Gastrocnemius medialis (tissue), 4 donors: ENCODE measurements at regions of chr19 and their contacts with region 1.

Region 1: GRCh38 chr19:18521885-18522624 is at the start of gene ELL:
- DNase-seq: peak; percentile 100
- ATAC-seq: peak; percentile 73 to 74
- H3K4me3 ChIP-seq: peak within 1 kb of the TSS; percentile 85 to 99 (median 95)
- H3K27ac ChIP-seq: peak within 1 kb of the TSS; percentile 97 to 100 (median 98)
- H3K4me1 ChIP-seq: peaks cover 27 to 31% of the 10 kb centered on the region in 2 donors
- H3K27me3 ChIP-seq: no peaks in the 10 kb centered on the region
- CTCF ChIP-seq: peak in 1 of 5 experiments; percentile 40
- POLR2A ChIP-seq: peak; percentile 99
- total RNA-seq, gene ELL: 21.8 to 30.8 (median 27.3) TPM

Region 2: GRCh38 chr19:18450931-18451845 is 70.9 kb before region 1 on chr19:
- in situ Hi-C with region 1: no loop called
- intact Hi-C with region 1: no loop called
- DNase-seq: peak; percentile 56 to 80
- ATAC-seq: peak; percentile 73 to 83
- H3K4me3 ChIP-seq: no peak overlapping the region
- H3K27ac ChIP-seq: peak overlapping the region in 3 of 4 donors; percentile 18 to 28 (median 20)
- H3K4me1 ChIP-seq: peaks cover 6 to 16% of the 10 kb centered on the region in 2 donors
- H3K27me3 ChIP-seq: no peaks in the 10 kb centered on the region
- CTCF ChIP-seq: peak; percentile 97 to 99 (median 98)
- POLR2A ChIP-seq: no peak

Region 3: DNA sequence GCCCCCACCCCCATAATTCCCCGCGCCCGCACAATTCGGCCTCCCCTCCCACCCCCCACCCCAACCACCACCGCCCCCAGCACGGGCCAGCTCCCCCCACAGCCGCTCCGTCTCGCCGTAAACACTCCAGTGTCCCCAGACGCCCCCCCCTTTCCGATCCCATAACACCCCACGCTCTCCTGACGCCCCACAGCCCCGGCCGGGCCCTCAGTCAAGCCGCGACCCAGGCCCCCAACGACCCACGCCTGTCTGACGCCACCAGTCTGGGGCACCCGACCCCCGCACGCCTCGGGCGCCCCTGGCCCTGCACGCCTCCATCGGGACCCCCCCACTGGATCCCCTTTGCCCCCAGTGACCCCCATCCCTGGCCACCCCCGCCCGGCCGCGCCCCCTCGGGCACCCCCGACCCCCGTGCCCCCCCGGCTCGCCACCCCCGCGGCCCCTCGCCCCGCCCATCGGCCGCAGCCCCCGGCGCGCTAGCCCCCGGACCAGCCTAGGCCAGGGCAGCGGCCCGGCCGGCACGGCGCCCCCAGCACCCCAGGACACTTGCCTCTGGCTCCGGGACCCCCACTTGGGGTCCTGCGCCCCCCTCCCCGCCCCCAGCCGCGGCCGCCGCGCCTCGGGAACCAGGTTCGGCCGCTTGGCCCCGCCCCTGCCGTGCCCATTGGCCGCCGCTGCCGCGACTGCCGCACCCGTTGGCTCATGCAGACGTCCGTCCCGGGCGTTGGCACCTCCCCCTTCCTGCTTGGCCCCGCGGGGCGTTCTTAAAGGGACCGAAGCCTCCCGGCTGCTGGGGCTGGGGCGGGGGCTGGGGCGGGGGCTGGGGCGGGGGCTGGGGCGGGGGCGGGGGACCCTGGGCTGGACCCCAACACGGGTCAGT is 21.1 kb after region 1 on chr19 and contains the start of gene FKBP8:
- in situ Hi-C with region 1: no loop called
- intact Hi-C with region 1: loop called (anchors 2 kb)
- DNase-seq: peak; percentile 93
- ATAC-seq: peak; percentile 96 to 97
- H3K4me3 ChIP-seq: peak within 1 kb of the TSS; percentile 69 to 87 (median 78)
- H3K27ac ChIP-seq: peak within 1 kb of the TSS; percentile 93 to 95 (median 93)
- H3K4me1 ChIP-seq: peaks cover 14 to 16% of the 10 kb centered on the region in 2 donors
- H3K27me3 ChIP-seq: no peaks in the 10 kb centered on the region
- CTCF ChIP-seq: no peak
- POLR2A ChIP-seq: peak in 1 of 2 donors; percentile 12
- total RNA-seq, gene FKBP8: 157 to 195 (median 184) TPM

Region 4: GRCh38 chr19:18557474-18558201 is 35.6 kb after region 1 on chr19 and contains the start of gene KXD1:
- in situ Hi-C with region 1: no loop called
- intact Hi-C with region 1: loop called (anchors 1 kb)
- DNase-seq: peak; percentile 98
- ATAC-seq: peak; percentile 99 to 100
- H3K4me3 ChIP-seq: peak within 1 kb of the TSS; percentile 82 to 91 (median 88)
- H3K27ac ChIP-seq: peak within 1 kb of the TSS; percentile 95 to 98 (median 96)
- H3K4me1 ChIP-seq: peaks cover 0 to 17% of the 10 kb centered on the region in 2 donors
- H3K27me3 ChIP-seq: no peaks in the 10 kb centered on the region
- CTCF ChIP-seq: no peak
- POLR2A ChIP-seq: peak; percentile 86 to 92
- total RNA-seq, gene KXD1: 97.1 to 155 (median 106) TPM

Region 5: DNA sequence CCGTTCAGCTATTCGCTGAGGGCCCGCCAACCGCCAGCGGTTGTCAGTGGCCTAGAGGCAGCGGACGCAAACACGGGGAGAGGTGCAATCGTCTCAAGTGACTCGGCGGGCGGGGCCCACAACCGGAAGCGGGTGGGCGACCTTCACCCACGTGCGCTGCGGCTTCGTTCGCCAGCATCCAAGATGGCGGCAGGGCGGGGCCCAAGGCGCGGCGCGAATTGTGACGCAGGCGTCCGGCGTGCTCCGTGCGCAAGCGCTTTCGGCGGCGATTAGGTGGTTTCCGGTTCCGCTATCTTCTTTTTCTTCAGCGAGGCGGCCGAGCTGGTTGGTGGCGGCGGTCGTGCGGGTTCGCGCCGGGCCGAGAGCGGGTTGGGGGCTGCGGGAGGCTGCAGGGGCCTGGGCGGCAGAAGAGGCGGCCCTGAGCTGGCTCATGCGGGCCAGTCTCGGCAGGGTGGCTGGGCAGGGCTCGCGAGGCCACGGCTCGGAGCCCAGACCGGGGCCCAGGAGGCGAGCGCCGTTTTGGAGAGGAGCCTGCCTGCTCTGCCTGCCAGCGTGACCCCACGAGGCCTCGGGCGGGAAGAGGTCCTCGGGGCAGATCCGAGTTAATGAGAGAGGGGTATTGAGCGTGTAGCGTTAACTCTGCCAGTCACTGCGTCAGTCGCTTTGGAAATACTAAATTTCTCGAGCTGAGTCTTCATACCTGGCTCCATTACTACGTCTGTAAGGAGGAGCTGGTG is 49.7 kb after region 1 on chr19 and contains the start of gene UBA52:
- in situ Hi-C with region 1: no loop called
- intact Hi-C with region 1: loop called (anchors 1 kb)
- DNase-seq: peak; percentile 97 to 98
- ATAC-seq: peak; percentile 94 to 95
- H3K4me3 ChIP-seq: peak within 1 kb of the TSS; percentile 78 to 90 (median 82)
- H3K27ac ChIP-seq: peak within 1 kb of the TSS; percentile 88 to 98 (median 94)
- H3K4me1 ChIP-seq: peaks cover 10 to 16% of the 10 kb centered on the region in 2 donors
- H3K27me3 ChIP-seq: no peaks in the 10 kb centered on the region
- CTCF ChIP-seq: peak in 1 of 5 experiments; percentile 6
- POLR2A ChIP-seq: peak; percentile 95 to 98
- total RNA-seq, gene UBA52: 512 to 719 (median 537) TPM

Region 6: GRCh38 chr19:18898081-18898606 is 376.1 kb after region 1 on chr19:
- in situ Hi-C with region 1: no loop called
- intact Hi-C with region 1: no loop called
- DNase-seq: peak in 1 of 2 donors; percentile 35
- ATAC-seq: no peak
- H3K4me3 ChIP-seq: no peak overlapping the region
- H3K27ac ChIP-seq: no peak overlapping the region
- H3K4me1 ChIP-seq: peaks cover 8 to 29% of the 10 kb centered on the region in 2 donors
- H3K27me3 ChIP-seq: no peaks in the 10 kb centered on the region
- CTCF ChIP-seq: no peak
- POLR2A ChIP-seq: no peak

Region 7: DNA sequence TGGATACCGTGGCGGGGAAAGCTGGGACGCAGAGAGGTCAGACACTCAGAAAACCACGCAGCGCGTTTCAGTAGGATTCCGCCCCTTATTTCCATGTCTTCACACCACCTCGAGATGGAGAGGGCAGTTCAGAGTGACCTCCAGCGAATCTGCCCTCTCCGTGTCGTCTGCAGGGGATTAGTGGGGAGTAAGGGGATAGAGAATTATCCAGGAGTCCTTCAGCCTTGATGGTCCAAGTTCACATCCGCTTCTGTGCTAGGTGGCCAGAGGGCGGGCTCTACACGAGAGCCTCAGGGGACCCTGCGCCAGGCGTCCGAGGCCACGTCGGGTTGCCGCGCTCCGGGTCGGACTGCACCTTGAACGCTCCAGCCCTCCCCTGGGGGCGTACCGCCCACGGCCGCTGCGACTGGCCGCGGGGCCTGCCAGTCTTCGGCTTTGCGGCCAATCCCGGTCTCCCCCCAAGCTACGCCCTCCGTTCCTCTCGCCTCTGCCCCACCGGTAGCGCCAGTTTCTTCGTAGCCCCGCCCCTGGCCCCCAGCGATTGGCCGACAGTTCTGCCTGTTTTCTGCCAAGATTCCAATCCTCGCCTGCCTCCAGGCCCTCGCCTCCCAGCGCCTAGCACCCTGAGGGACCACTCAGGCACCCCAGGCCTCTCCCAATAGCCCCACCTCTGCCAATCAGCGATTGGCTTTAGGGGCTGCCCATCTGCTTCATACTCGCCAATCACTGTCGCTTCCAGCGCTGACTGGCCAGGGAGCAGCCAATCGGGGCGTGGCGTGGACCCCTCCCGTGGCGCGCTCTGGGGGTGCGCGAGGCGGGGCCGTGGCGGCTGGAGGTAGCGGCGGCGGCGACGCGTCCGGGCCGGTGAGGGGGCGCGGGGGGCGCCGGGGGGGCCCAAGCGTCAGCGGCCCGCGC is 541.4 kb after region 1 on chr19 and contains the start of gene SLC25A42:
- in situ Hi-C with region 1: no loop called
- intact Hi-C with region 1: loop called (anchors 2 kb)
- DNase-seq: peak; percentile 99 to 100
- ATAC-seq: peak; percentile 71 to 84
- H3K4me3 ChIP-seq: peak within 1 kb of the TSS; percentile 70 to 85 (median 78)
- H3K27ac ChIP-seq: peak within 1 kb of the TSS; percentile 94 to 96 (median 94)
- H3K4me1 ChIP-seq: peaks cover 78% of the 10 kb centered on the region in 2 donors
- H3K27me3 ChIP-seq: no peaks in the 10 kb centered on the region
- CTCF ChIP-seq: peak in 1 of 5 experiments; percentile 10
- POLR2A ChIP-seq: peak; percentile 96 to 97
- total RNA-seq, gene SLC25A42: 12.3 to 85.3 (median 37.1) TPM